ENCODE measurements at regions of chr1 and their contacts with region 1.

Region 1: DNA sequence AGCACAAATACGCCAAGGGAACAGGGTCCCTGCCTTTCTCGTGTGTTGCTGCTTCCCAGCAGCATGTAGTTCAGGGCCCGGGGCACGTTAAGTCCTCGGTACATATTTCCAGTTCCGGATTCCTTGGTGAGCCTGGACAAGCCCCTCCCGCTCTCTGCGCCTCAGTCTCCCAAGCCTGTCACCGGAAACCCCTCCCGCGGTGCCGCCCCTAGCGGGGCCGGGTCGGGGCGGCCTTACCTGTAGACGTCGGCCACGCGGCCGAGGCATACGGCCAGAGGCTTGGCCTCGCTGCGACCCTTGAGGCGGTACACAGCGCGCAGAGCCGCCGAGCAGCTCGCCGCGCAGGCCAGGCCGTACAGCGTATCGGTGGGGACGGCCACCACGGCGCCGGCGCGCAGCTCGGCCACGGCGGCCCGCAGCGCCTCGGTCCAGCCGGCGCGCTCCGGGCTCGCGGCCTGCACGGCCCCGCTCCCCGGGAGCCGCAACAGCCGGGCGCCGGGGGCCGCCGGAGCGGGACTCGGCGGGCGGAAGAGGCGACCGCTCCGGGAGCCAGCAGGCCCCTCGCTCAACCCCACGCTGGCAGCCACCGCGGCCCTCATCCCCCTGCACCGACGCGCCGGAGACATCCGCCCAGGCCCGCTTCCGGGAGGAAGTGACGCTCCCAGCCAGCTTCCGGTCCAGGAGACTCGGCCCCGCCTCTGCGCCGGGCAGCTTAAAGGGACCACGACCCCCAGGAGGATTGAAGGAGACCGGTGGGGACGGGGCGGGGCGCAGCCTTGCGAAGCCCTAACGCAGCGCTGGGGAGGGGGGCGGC is at the starts of genes C1orf122 and YRDC:
- DNase-seq: peak; percentile 86 to 95
- H3K4me3 ChIP-seq: peak within 1 kb of the TSS; percentile 71
- H3K27ac ChIP-seq: peak within 1 kb of the TSS; percentile 63
- H3K4me1 ChIP-seq: peaks cover 20% of the 10 kb centered on the region
- H3K27me3 ChIP-seq: no peaks in the 10 kb centered on the region
- CTCF ChIP-seq: no peak
- total RNA-seq, gene C1orf122: 51.8 and 75.8 TPM in 2 replicates
- total RNA-seq, gene YRDC: 13.2 and 16.0 TPM in 2 replicates

Region 2: DNA sequence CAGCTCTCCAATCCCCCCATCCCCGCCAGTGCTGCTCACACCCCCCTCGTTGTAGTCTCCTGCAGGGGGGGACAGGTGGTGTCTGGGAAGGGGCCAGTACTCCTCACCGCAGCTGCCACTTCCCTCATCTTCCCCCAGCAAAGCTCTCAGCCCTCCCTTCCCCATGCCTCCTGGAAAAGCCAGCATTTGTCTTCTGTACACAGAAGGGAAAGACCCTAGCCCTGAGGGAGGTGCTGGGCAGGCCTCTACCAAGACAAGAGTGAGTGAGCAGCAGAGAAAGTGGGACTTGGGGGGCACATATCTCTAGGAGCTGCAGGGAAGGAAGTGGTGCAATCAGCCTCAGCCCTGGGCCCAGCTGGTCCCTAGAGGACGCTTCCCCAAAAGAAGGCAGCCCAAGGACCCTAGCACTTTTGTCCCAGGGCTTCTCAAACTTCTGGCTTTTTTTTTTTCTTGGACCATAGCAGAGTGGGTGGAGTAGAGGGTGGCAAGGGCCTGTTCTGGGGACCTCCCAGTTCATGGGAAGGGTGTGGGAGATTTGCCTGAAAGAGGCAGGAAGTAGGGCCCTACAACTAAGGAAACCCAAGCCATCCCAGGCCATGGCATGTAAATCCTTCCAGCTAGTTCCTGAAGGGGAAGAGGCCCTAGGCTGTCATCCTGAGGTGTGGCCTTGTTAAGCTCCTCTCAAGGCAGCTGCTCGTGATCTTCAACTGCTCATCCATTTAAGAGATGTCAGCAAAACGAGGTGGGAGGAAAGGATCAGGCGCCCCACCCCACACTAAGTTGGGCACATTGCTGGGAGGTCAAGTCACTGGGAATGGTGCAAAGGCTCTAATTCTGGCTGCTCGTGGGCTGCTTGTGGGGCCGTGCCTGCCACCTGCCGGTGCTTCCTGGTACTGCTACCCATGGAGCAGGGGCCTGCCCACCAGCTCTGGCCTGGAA is 320.8 kb before region 1 on chr1:
- CTCF ChIA-PET with region 1: no interaction called
- POLR2A ChIA-PET with region 1: interaction called, 17 read pairs
- intact Hi-C with region 1: no loop called
- DNase-seq: peak; percentile 53 to 84
- H3K4me3 ChIP-seq: no peak overlapping the region
- H3K27ac ChIP-seq: no peak overlapping the region
- H3K4me1 ChIP-seq: peaks cover 42% of the 10 kb centered on the region
- H3K27me3 ChIP-seq: no peaks in the 10 kb centered on the region
- CTCF ChIP-seq: peak; percentile 100

Region 3: GRCh38 chr1:37595440-37596319 is 212.1 kb before region 1 on chr1 and contains the start of gene GNL2:
- CTCF ChIA-PET with region 1: no interaction called
- POLR2A ChIA-PET with region 1: no interaction called
- intact Hi-C with region 1: no loop called
- DNase-seq: peak; percentile 85 to 98
- H3K4me3 ChIP-seq: peak within 1 kb of the TSS; percentile 85
- H3K27ac ChIP-seq: peak within 1 kb of the TSS; percentile 3; the same call in 1 of the 2 replicates
- H3K4me1 ChIP-seq: peaks cover 14% of the 10 kb centered on the region
- H3K27me3 ChIP-seq: no peaks in the 10 kb centered on the region
- CTCF ChIP-seq: no peak
- total RNA-seq, gene GNL2: 51.3 and 51.9 TPM in 2 replicates

Region 4: GRCh38 chr1:37734629-37735591 is 72.9 kb before region 1 on chr1:
- CTCF ChIA-PET with region 1: interaction called, 10 read pairs
- POLR2A ChIA-PET with region 1: interaction called, 31 read pairs
- intact Hi-C with region 1: no loop called
- DNase-seq: no peak
- H3K4me3 ChIP-seq: no peak overlapping the region
- H3K27ac ChIP-seq: no peak overlapping the region
- H3K4me1 ChIP-seq: peaks cover 17% of the 10 kb centered on the region
- H3K27me3 ChIP-seq: no peaks in the 10 kb centered on the region
- CTCF ChIP-seq: no peak

Region 5: DNA sequence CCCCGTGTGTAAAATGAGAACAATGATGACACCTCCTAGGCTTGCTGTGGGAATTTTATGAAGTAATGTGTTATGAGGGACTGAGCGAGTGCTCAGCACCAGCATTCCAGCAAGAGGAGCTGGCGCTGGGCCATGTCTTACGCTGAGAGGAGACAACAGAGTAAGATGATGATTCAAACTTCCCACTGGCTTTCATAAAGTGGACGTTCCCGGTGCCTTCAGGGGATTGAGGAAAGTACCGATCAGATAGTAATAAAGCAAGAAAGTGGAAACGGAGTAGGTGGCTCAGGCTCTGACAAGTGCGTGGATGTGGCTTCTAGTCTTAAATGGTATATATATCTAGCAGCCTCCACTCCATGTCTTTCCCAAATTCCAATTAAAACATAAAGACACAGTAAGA is 66.6 kb before region 1 on chr1:
- CTCF ChIA-PET with region 1: interaction called, 10 read pairs
- POLR2A ChIA-PET with region 1: no interaction called
- intact Hi-C with region 1: no loop called
- DNase-seq: peak in 1 of 2 experiments; percentile 64
- H3K4me3 ChIP-seq: no peak overlapping the region
- H3K27ac ChIP-seq: no peak overlapping the region
- H3K4me1 ChIP-seq: peaks cover 14% of the 10 kb centered on the region
- H3K27me3 ChIP-seq: no peaks in the 10 kb centered on the region
- CTCF ChIP-seq: no peak

Region 6: GRCh38 chr1:37850352-37850955 is 42.7 kb after region 1 on chr1:
- CTCF ChIA-PET with region 1: interaction called, 11 read pairs
- POLR2A ChIA-PET with region 1: no interaction called
- intact Hi-C with region 1: no loop called
- DNase-seq: peak; percentile 24 to 97
- H3K4me3 ChIP-seq: peak overlapping the region; percentile 44; the same call in 1 of the 2 replicates
- H3K27ac ChIP-seq: peak overlapping the region; percentile 97
- H3K4me1 ChIP-seq: peaks cover 57% of the 10 kb centered on the region
- H3K27me3 ChIP-seq: no peaks in the 10 kb centered on the region
- CTCF ChIP-seq: no peak

Region 7: GRCh38 chr1:37859507-37860345 is 52.0 kb after region 1 on chr1 and contains the start of gene MTF1:
- CTCF ChIA-PET with region 1: interaction called, 8 read pairs
- POLR2A ChIA-PET with region 1: no interaction called
- intact Hi-C with region 1: loop called (anchors 2 kb)
- DNase-seq: peak; percentile 91 to 97
- H3K4me3 ChIP-seq: peak within 1 kb of the TSS; percentile 76
- H3K27ac ChIP-seq: peak within 1 kb of the TSS; percentile 91
- H3K4me1 ChIP-seq: peaks cover 31% of the 10 kb centered on the region
- H3K27me3 ChIP-seq: no peaks in the 10 kb centered on the region
- CTCF ChIP-seq: peak; percentile 92
- total RNA-seq, gene MTF1: 22.1 and 22.5 TPM in 2 replicates